Naive thymus-derived CD4-positive, alpha-beta T cell (primary cell): ENCODE measurements at regions of chr7 and their contacts with region 1.

Region 1: GRCh38 chr7:134954197-134955082 is 31.9 kb upstream of the AGBL3 start:
- DNase-seq: peak in 6 of 9 donors; percentile 29 to 63 (median 48)
- ATAC-seq: peak; percentile 59
- H3K4me3 ChIP-seq: no peak overlapping the region
- H3K4me3 Mint-ChIP-seq: no peak overlapping the region
- H3K27ac ChIP-seq: no peak overlapping the region
- H3K27ac Mint-ChIP-seq: peak overlapping the region in 1 of 9 donors; percentile 26
- H3K4me1 ChIP-seq: no peaks in the 10 kb centered on the region
- H3K4me1 Mint-ChIP-seq: peaks cover 0 to under 1% (median 0%) of the 10 kb centered on the region in 7 donors
- H3K27me3 ChIP-seq: no peaks in the 10 kb centered on the region
- H3K27me3 Mint-ChIP-seq: no peaks in the 10 kb centered on the region

Region 2: DNA sequence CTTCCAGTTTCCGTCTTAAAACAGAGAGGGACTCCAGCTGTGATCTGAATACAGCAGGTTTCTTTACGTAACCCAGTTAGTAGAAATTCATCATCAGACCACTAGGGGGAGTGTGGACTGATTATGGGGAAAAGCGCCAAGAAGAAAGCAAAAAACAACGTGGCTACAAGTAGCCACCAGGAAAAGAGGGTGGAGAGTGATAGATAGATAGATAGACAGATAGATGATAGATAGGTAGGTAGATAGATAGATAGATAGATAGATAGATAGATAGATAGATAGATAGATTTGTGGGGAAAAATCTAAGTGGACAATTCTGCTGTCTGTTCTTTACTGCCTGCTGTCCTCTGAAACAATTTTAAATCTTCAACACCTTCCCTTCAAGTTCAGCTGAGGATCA is 439.8 kb before region 1 on chr7:
- CTCF ChIA-PET with region 1: no interaction called
- POLR2A ChIA-PET with region 1: no interaction called
- intact Hi-C with region 1: loop called (anchors 1 to 2 kb)
- DNase-seq: peak in 7 of 9 donors; percentile 32 to 67 (median 57)
- ATAC-seq: peak; percentile 81
- H3K4me3 ChIP-seq: no peak overlapping the region
- H3K4me3 Mint-ChIP-seq: peak overlapping the region in 1 of 10 donors; percentile 49
- H3K27ac ChIP-seq: no peak overlapping the region
- H3K27ac Mint-ChIP-seq: no peak overlapping the region
- H3K4me1 ChIP-seq: no peaks in the 10 kb centered on the region
- H3K4me1 Mint-ChIP-seq: peaks cover 4 to 6% (median 5%) of the 10 kb centered on the region in 7 donors
- H3K27me3 ChIP-seq: no peaks in the 10 kb centered on the region
- H3K27me3 Mint-ChIP-seq: peaks cover 6 to 21% (median 14%) of the 10 kb centered on the region in 5 donors

Region 3: GRCh38 chr7:134690016-134690415 is 264.4 kb before region 1 on chr7:
- CTCF ChIA-PET with region 1: interaction called, 5 read pairs
- POLR2A ChIA-PET with region 1: interaction called, 3 read pairs
- intact Hi-C with region 1: loop called (anchors 1 kb)
- DNase-seq: peak in 1 of 9 donors; percentile 12
- ATAC-seq: no peak
- H3K4me3 ChIP-seq: no peak overlapping the region
- H3K4me3 Mint-ChIP-seq: no peak overlapping the region
- H3K27ac ChIP-seq: no peak overlapping the region
- H3K27ac Mint-ChIP-seq: peak overlapping the region in 6 of 9 donors; percentile 10 to 43 (median 34)
- H3K4me1 ChIP-seq: peaks cover 0 to 5% of the 10 kb centered on the region in 2 donors
- H3K4me1 Mint-ChIP-seq: peaks cover 6 to 26% (median 14%) of the 10 kb centered on the region in 7 donors
- H3K27me3 ChIP-seq: no peaks in the 10 kb centered on the region
- H3K27me3 Mint-ChIP-seq: peaks cover 0 to 7% (median 0%) of the 10 kb centered on the region in 5 donors

Region 4: DNA sequence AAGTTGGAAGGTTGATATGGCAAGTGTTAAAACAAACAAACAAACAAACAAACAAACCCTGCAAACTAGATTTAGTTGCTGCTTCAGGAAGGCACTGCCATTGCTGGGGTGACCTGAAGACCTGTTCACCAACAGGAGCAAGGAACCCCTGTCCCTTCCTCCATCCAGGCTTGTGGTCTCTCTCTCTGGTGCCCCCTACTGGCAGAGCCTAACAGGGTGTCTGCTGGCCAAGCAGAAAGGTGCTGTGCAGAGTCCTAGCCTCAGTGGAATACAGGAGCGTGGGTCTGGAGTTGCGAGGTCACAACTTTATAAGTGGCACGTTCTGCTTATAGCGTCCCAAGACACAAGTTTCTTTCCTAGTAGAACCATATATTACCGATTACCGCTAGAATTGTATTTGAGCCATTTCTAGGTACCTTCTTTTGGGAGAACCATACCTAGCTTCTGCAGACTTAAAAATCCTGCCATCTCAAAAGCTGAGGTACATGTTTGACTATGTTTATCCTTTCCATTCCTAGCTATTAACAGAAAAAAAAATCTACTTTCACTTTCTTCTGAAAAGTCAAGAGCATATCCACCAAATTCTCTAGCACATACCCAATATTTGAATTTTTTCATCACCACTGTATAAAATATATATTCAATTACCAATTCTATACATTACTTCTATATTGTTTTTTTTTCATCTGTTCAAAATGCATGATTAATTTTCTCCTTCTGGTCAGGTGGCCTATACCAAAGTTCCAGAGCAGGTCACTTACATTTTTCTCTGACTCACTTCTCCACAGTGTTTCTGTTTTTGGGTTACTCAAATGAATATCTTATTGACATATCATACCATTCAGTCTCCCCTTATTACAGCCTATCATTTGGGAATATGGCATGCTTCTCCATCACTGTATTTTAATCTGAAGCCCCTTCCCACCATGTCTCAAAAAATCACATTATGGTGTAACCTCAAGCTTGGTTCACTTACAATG is 204.1 kb before region 1 on chr7:
- CTCF ChIA-PET with region 1: interaction called, 4 read pairs
- POLR2A ChIA-PET with region 1: interaction called, 3 read pairs
- intact Hi-C with region 1: loop called (anchors 1 to 2 kb)
- DNase-seq: peak; percentile 26 to 68 (median 49)
- ATAC-seq: peak; percentile 87
- H3K4me3 ChIP-seq: no peak overlapping the region
- H3K4me3 Mint-ChIP-seq: no peak overlapping the region
- H3K27ac ChIP-seq: no peak overlapping the region
- H3K27ac Mint-ChIP-seq: no peak overlapping the region
- H3K4me1 ChIP-seq: no peaks in the 10 kb centered on the region
- H3K4me1 Mint-ChIP-seq: peaks cover 0 to 10% (median 0%) of the 10 kb centered on the region in 7 donors
- H3K27me3 ChIP-seq: no peaks in the 10 kb centered on the region
- H3K27me3 Mint-ChIP-seq: no peaks in the 10 kb centered on the region

Region 5: GRCh38 chr7:134986363-134987251 is 32.2 kb after region 1 on chr7 and contains the start of gene AGBL3:
- CTCF ChIA-PET with region 1: interaction called, 6 read pairs
- POLR2A ChIA-PET with region 1: no interaction called
- intact Hi-C with region 1: loop called in 1 of 2 experiments (anchors 2 kb)
- DNase-seq: peak; percentile 80 to 92 (median 89)
- ATAC-seq: peak; percentile 94
- H3K4me3 ChIP-seq: peak within 1 kb of the TSS; percentile 92
- H3K4me3 Mint-ChIP-seq: peak within 1 kb of the TSS; percentile 93 to 100 (median 98)
- H3K27ac ChIP-seq: peak within 1 kb of the TSS; percentile 96
- H3K27ac Mint-ChIP-seq: peak within 1 kb of the TSS; percentile 97 to 100 (median 99)
- H3K4me1 ChIP-seq: no peaks in the 10 kb centered on the region
- H3K4me1 Mint-ChIP-seq: peaks cover 20 to 61% (median 52%) of the 10 kb centered on the region in 7 donors
- H3K27me3 ChIP-seq: no peaks in the 10 kb centered on the region
- H3K27me3 Mint-ChIP-seq: no peaks in the 10 kb centered on the region
- total RNA-seq, gene AGBL3: 2.1 to 6.6 (median 3.8) TPM

Region 6: GRCh38 chr7:135362871-135363270 is 408.4 kb after region 1 on chr7:
- CTCF ChIA-PET with region 1: no interaction called
- POLR2A ChIA-PET with region 1: no interaction called
- intact Hi-C with region 1: no loop called
- DNase-seq: no peak
- ATAC-seq: no peak
- H3K4me3 ChIP-seq: no peak overlapping the region
- H3K4me3 Mint-ChIP-seq: no peak overlapping the region
- H3K27ac ChIP-seq: no peak overlapping the region
- H3K27ac Mint-ChIP-seq: no peak overlapping the region
- H3K4me1 ChIP-seq: no peaks in the 10 kb centered on the region
- H3K4me1 Mint-ChIP-seq: peaks cover 0 to 6% (median 0%) of the 10 kb centered on the region in 7 donors
- H3K27me3 ChIP-seq: no peaks in the 10 kb centered on the region
- H3K27me3 Mint-ChIP-seq: no peaks in the 10 kb centered on the region